CD14-positive monocyte (primary cell): ENCODE measurements at regions of chr3 and their contacts with region 1.

Region 1: GRCh38 chr3:117126946-117127546 is 417.5 kb downstream of the TUSC7 start:
- DNase-seq: no peak
- H3K4me3 ChIP-seq: no peak overlapping the region
- H3K4me3 Mint-ChIP-seq: no peak overlapping the region
- H3K27ac ChIP-seq: no peak overlapping the region
- H3K27ac Mint-ChIP-seq: no peak overlapping the region
- H3K4me1 ChIP-seq: peaks cover 0 to 10% of the 10 kb centered on the region in 2 donors
- H3K4me1 Mint-ChIP-seq: peaks cover 12% of the 10 kb centered on the region
- H3K27me3 ChIP-seq: no peaks in the 10 kb centered on the region
- H3K27me3 Mint-ChIP-seq: peaks cover 3 to 6% (median 4%) of the 10 kb centered on the region in 3 donors
- CTCF ChIP-seq: peak; percentile 24

Region 2: DNA sequence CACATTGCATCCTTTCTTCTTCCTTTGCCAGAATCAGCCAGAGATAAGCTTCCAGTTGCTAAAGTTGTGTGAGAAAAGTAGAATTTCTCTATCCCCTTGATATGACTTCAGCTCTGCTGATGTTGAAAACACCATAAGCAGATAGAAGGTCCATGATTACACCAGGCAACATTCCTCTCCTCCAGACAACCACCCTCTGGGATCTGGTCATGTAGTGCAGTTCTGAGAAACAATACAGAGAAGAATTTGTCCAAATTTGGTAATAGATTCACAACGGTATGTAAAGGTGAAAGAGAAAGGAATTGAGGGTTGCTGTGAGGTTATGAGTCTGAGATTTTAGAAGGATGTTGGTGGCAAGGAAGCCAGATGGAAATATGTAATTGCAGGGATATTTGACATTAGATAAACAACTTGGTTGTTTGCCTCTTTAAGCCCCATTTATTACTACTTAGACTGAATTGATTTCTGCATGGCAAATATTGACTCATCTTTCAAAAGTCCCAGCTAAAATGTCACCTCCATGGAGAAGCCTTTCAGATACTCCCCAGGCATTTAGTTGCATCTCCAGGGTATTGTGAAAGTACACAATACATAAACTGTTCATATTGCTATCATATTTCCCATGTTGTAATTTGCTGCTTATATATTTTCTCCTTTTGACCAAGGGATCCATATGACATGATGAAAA is 1368.8 kb before region 1 on chr3:
- intact Hi-C with region 1: no loop called
- DNase-seq: no peak
- H3K4me3 ChIP-seq: no peak overlapping the region
- H3K4me3 Mint-ChIP-seq: no peak overlapping the region
- H3K27ac ChIP-seq: no peak overlapping the region
- H3K27ac Mint-ChIP-seq: no peak overlapping the region
- H3K4me1 ChIP-seq: no peaks in the 10 kb centered on the region
- H3K4me1 Mint-ChIP-seq: no peaks in the 10 kb centered on the region
- H3K27me3 ChIP-seq: no peaks in the 10 kb centered on the region
- H3K27me3 Mint-ChIP-seq: no peaks in the 10 kb centered on the region
- CTCF ChIP-seq: no peak

Region 3: GRCh38 chr3:117144853-117145252 is 17.8 kb after region 1 on chr3:
- intact Hi-C with region 1: loop called in 1 of 2 experiments (anchors 2 kb)
- DNase-seq: no peak
- H3K4me3 ChIP-seq: no peak overlapping the region
- H3K4me3 Mint-ChIP-seq: no peak overlapping the region
- H3K27ac ChIP-seq: no peak overlapping the region
- H3K27ac Mint-ChIP-seq: no peak overlapping the region
- H3K4me1 ChIP-seq: no peaks in the 10 kb centered on the region
- H3K4me1 Mint-ChIP-seq: no peaks in the 10 kb centered on the region
- H3K27me3 ChIP-seq: no peaks in the 10 kb centered on the region
- H3K27me3 Mint-ChIP-seq: peaks cover 0 to 6% (median 3%) of the 10 kb centered on the region in 3 donors
- CTCF ChIP-seq: no peak